ENCODE measurements at regions of chr13 and their contacts with region 1.

Region 1: GRCh38 chr13:73138643-73139491 is 80.1 kb downstream of the KLF5 start:
- DNase-seq: peak; percentile 83
- ATAC-seq: peak; percentile 90
- H3K4me3 ChIP-seq: peak overlapping the region; percentile 47; the same call in 1 of the 2 replicates
- H3K27ac ChIP-seq: peak overlapping the region; percentile 94
- H3K4me1 ChIP-seq: peaks cover 52% of the 10 kb centered on the region
- H3K27me3 ChIP-seq: no peaks in the 10 kb centered on the region
- CTCF ChIP-seq: no peak

Region 2: DNA sequence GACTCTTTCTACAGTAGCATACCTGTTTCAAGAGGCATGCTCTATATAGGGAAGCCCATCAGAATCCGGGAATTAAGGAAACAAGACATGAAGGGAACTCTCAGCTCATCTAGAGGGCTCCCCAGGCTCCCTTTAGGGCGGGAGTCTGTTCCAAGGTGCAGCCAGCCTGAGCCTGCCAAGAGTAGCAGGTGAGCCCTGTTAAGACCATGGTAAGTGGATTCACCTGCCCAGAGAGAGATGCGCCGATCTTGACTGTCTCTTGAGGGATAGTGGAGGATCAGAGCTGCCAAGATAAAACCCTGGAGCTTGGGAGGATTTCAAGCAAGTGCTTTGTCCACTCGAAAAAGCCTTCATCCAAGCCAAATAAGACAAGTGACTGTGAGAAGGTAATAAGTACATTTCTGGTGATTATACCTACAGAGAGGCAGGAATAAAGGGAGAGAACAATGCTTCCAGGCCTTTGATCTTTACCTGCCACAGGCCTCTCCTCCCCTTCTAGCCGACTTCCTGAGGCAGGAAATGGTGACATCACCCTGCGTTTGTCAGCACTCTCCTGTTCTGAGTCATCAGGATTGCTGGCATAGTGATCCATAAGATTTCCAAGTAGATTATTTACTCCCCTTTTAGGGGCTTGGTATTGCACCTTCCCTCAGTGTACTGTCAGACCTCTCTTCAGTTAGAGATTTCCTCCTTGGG is 48.6 kb before region 1 on chr13:
- CTCF ChIA-PET with region 1: no interaction called
- POLR2A ChIA-PET with region 1: interaction called, 5 read pairs
- intact Hi-C with region 1: loop called (anchors 2 kb)
- DNase-seq: peak; percentile 95
- ATAC-seq: peak; percentile 98
- H3K4me3 ChIP-seq: no peak overlapping the region
- H3K27ac ChIP-seq: peak overlapping the region; percentile 98
- H3K4me1 ChIP-seq: peaks cover 13% of the 10 kb centered on the region
- H3K27me3 ChIP-seq: no peaks in the 10 kb centered on the region
- CTCF ChIP-seq: no peak

Measured in PC-3 (cell line).